ENCODE measurements at regions of chr1 and their contacts with region 1.

Region 1: DNA sequence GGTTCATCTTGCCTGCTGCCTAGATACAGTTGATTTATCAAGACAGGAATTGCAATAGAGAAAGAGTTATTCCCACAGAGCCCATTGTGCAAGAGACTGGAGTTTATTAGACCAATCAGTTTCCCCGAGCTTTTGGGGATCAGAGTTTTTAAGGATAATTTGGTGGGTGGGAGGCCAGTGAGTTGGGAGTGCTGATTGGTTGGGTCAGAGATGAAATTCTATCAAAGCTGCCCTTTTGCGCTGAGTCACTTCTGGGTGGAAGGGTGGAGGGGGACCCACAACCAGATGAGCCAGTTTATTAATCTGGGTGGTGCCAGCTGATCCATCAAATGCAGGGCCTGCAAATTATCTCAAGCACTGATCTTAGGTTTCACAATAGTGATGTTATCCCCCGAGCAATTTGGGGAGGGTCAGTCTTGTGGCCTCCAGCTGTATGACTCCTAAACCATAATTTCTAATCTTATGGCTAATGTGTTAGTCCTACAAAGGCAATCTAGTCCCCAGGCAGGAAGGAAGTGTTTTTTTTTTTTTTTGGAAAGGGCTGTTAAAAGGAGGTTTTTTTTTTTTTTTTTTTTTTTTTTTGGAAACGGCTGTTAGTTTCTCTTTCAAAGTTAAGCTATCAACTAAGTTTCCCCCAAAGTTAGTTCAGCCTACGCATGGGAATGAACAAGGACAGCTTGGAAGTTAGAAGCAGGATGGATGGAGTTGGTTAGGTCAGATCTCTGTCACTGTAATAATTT is 7.4 kb downstream of the SLC16A4 start:
- DNase-seq: peak; percentile 78 to 99
- H3K4me3 ChIP-seq: peak overlapping the region; percentile 49
- H3K27ac ChIP-seq: peak overlapping the region; percentile 79
- H3K4me1 ChIP-seq: peaks cover 47% of the 10 kb centered on the region
- H3K27me3 ChIP-seq: no peaks in the 10 kb centered on the region
- CTCF ChIP-seq: no peak

Region 2: GRCh38 chr1:110170766-110171733 is 212.4 kb before region 1 on chr1:
- CTCF ChIA-PET with region 1: no interaction called
- POLR2A ChIA-PET with region 1: no interaction called
- intact Hi-C with region 1: no loop called
- DNase-seq: no peak
- H3K4me3 ChIP-seq: no peak overlapping the region
- H3K27ac ChIP-seq: no peak overlapping the region
- H3K4me1 ChIP-seq: no peaks in the 10 kb centered on the region
- H3K27me3 ChIP-seq: no peaks in the 10 kb centered on the region
- CTCF ChIP-seq: no peak

Region 3: DNA sequence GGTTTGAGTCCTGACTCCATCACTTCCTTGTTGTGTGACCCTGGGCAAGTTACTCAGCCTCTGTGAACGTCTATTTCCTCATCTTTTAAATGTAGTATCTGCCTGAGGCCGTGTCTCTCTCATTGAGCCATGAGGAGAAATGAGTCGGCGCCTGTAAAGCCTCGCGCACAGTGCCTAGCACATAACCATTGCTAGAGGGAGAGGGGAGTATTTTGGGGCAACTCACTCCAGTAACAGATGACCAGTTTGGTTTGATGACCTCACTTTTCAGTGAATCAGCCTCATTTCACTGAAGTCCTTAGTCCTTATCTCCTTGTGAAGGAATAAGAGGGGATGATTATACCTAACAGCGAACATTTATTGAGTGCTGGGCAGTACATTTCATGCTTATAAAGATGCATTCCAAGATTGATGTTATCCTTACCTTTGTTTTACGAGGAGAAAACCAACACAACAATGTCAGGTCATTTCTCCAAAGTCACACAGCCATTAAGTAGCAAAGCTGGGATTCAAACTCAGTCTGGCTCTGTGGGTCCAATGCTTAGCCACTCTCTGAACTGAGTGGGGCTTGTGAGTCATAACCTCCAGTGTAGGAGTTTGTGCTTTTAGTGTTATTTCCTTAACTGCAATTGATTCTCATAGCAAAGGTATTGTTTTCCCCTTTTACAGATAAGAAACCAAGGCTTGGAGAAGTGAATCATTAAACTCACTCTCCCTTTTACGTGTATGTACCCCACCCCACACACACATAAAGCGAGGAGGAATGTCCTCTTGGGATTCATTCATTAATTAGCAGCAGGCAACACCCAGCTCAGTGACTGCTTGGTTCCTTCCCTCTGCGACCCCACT is 147.4 kb before region 1 on chr1:
- CTCF ChIA-PET with region 1: no interaction called
- POLR2A ChIA-PET with region 1: no interaction called
- intact Hi-C with region 1: no loop called
- DNase-seq: peak; percentile 42 to 99
- H3K4me3 ChIP-seq: no peak overlapping the region
- H3K27ac ChIP-seq: peak overlapping the region; percentile 89
- H3K4me1 ChIP-seq: peaks cover 53% of the 10 kb centered on the region
- H3K27me3 ChIP-seq: no peaks in the 10 kb centered on the region
- CTCF ChIP-seq: no peak

Region 4: GRCh38 chr1:110440877-110441276 is 57.5 kb after region 1 on chr1:
- CTCF ChIA-PET with region 1: no interaction called
- POLR2A ChIA-PET with region 1: no interaction called
- intact Hi-C with region 1: loop called (anchors 2 kb)
- DNase-seq: peak; percentile 72 to 95
- H3K4me3 ChIP-seq: no peak overlapping the region
- H3K27ac ChIP-seq: peak overlapping the region; percentile 28
- H3K4me1 ChIP-seq: peaks cover 23% of the 10 kb centered on the region
- H3K27me3 ChIP-seq: no peaks in the 10 kb centered on the region
- CTCF ChIP-seq: no peak

Region 5: DNA sequence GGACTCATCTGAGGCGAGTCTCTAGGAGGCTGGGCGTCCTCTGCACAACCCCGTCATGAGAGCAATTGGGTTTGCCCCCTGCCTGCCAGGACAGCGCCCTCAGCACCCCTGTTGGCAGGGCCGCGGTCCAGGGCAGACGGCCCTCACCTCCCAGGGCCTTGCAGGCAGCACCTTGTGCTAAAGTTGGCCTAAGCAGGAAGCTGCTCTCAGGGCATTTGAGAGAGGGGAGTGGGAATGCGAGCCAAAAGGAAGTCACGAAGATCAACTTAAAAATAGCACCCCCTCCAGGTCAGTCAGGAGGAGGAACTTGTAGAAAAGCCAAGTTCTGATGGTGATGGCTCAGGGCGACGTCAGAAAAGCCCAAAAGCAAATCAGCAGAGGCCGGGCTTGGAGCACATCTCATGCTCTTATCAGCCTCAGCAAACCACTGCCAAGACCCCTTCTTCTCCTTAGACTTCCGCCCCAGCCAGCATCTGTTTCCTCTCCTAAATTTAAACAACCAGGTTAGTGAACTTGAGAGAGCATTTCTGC is 1132.6 kb after region 1 on chr1:
- CTCF ChIA-PET with region 1: no interaction called
- POLR2A ChIA-PET with region 1: interaction called, 16 read pairs
- intact Hi-C with region 1: no loop called
- DNase-seq: no peak
- H3K4me3 ChIP-seq: no peak overlapping the region
- H3K27ac ChIP-seq: no peak overlapping the region
- H3K4me1 ChIP-seq: no peaks in the 10 kb centered on the region
- H3K27me3 ChIP-seq: no peaks in the 10 kb centered on the region
- CTCF ChIP-seq: no peak

Measured in PC-9 (cell line).